Transverse colon (tissue), 4 donors: ENCODE measurements at regions of chrX and their contacts with region 1.

Region 1: GRCh38 chrX:37745354-37745753 is 34.5 kb upstream of the CYBB start:
- DNase-seq: peak; percentile 84
- H3K4me3 ChIP-seq: no peak overlapping the region
- H3K27ac ChIP-seq: no peak overlapping the region
- H3K4me1 ChIP-seq: peaks cover 0 to 7% (median 0%) of the 10 kb centered on the region in 4 donors
- H3K27me3 ChIP-seq: no peaks in the 10 kb centered on the region
- CTCF ChIP-seq: peak; percentile 68 to 82 (median 69)
- EP300 ChIP-seq: no peak
- POLR2A ChIP-seq: no peak

Region 2: DNA sequence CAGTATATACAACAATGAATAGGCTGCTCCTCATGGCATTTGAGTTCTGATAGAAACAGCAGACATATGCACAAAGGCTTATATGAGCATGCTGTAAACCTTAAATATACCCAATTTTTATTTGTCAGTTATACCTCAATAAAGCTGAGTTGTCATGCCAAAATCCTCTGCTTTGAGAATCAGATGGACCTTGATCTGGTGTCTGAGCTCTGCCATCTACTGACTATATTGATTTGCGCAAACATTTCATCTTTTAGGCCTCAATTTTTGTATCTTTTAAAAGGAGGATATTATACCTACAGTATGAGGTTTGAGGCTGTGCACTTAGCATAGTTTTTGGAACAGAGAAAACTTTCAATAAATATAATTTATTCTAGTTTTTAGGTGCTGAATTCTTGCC is 311.0 kb before region 1 on chrX:
- in situ Hi-C with region 1: no loop called
- intact Hi-C with region 1: no loop called
- DNase-seq: no peak
- H3K4me3 ChIP-seq: no peak overlapping the region
- H3K27ac ChIP-seq: no peak overlapping the region
- H3K4me1 ChIP-seq: no peaks in the 10 kb centered on the region
- H3K27me3 ChIP-seq: no peaks in the 10 kb centered on the region
- CTCF ChIP-seq: no peak
- EP300 ChIP-seq: no peak
- POLR2A ChIP-seq: no peak

Region 3: GRCh38 chrX:37646254-37646653 is 99.1 kb before region 1 on chrX:
- in situ Hi-C with region 1: loop called in 1 of 4 experiments (anchors 25 kb)
- intact Hi-C with region 1: no loop called
- DNase-seq: no peak
- H3K4me3 ChIP-seq: no peak overlapping the region
- H3K27ac ChIP-seq: no peak overlapping the region
- H3K4me1 ChIP-seq: no peaks in the 10 kb centered on the region
- H3K27me3 ChIP-seq: no peaks in the 10 kb centered on the region
- CTCF ChIP-seq: peak in 3 of 5 experiments; percentile 12 to 34 (median 21)
- EP300 ChIP-seq: no peak
- POLR2A ChIP-seq: no peak

Region 4: DNA sequence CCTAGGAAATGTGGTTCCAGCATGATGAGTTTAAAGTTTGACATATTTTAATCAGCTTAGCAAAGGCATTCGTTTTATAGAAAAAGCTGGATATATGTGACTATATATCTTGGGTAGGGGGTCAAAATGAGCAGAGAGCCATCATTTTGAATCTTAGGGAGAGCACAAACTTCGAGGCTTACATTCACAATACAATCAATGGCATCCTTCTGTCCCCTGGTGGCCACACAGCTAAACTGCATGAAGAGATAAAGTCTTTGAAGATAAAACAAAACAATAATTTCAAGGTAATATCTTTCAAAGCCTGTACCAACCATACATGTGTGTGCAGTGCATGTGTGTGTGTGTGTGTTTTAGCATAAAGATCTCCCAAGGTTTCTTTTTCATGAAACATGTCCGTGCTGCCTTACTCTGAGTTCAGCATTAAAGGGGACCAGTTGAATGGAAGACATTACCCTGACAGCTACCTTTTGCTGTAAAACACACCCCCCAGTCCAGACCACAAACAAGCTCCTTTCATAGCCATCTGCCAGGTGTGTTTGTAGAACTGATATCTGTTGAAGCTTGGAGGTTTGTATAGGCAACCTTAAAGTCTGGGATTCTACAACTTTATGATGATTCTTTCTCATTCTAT is 80.0 kb after region 1 on chrX:
- in situ Hi-C with region 1: loop called in 3 of 4 experiments (anchors 5 to 10 kb)
- intact Hi-C with region 1: no loop called
- DNase-seq: peak; percentile 58
- H3K4me3 ChIP-seq: no peak overlapping the region
- H3K27ac ChIP-seq: no peak overlapping the region
- H3K4me1 ChIP-seq: peaks cover 0 to 8% (median 2%) of the 10 kb centered on the region in 4 donors
- H3K27me3 ChIP-seq: no peaks in the 10 kb centered on the region
- CTCF ChIP-seq: peak; percentile 75 to 90 (median 89)
- EP300 ChIP-seq: no peak
- POLR2A ChIP-seq: no peak

Region 5: DNA sequence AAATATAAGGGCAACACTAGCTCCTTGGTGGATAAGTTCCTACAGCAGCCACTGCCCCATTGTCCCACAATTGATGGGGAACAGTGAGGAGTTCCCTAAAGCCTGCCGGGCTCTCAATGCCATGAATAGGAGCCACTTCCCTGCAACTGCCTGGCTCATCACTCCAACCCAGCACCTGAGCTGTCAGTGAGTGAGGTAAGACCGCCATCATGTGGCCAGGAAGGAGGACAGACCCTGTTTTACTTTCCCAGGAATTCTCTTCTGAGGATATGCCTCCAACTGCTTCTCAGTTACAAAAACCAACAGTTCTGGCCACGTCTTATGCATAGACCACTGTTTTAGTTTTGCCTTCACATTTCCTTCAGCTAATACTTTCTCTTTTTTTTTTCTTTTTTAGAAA is 429.8 kb after region 1 on chrX:
- in situ Hi-C with region 1: loop called in 1 of 4 experiments (anchors 25 kb)
- intact Hi-C with region 1: no loop called
- DNase-seq: peak; percentile 27
- H3K4me3 ChIP-seq: no peak overlapping the region
- H3K27ac ChIP-seq: no peak overlapping the region
- H3K4me1 ChIP-seq: no peaks in the 10 kb centered on the region
- H3K27me3 ChIP-seq: no peaks in the 10 kb centered on the region
- CTCF ChIP-seq: peak; percentile 15 to 44 (median 32)
- EP300 ChIP-seq: no peak
- POLR2A ChIP-seq: no peak